ENCODE measurements at regions of chr22 and their contacts with region 1.

Region 1: DNA sequence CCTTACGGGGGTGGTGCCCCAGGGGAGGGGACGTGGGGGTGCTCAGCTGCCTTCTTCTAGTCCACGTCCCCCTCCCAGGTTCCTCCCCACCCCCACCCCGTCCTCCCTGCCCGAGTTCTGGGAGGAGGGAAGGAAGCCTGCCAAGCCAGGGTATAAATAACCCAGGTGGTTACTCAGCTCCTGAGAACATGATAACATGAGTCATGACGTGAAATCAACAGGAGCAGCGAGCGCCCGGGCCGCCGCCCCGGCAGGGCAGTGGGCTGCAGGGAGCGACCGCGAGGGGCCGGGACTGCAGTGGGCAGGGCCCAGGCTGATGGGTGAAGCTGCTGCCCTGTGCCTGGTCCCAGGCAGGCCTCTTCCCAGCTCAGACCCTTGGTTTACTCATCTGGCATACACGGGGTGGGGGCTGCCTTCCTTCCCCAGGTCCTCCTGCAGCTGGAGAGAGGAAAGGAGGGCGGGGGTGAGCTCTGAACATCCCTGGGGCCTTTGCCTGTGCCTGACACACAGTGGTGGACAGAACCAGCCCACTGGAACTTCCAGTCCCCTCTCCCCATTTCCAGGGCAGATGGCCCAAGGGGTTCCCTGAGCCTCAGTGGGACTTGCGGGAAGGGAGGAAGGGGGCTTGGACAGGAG is 8.8 kb upstream of the PDGFB start:
- DNase-seq: no peak
- ATAC-seq: peak; percentile 41
- H3K4me3 Mint-ChIP-seq: no peak overlapping the region
- H3K27ac Mint-ChIP-seq: no peak overlapping the region
- H3K4me1 Mint-ChIP-seq: peaks cover 10% of the 10 kb centered on the region
- H3K27me3 Mint-ChIP-seq: peaks cover 53% of the 10 kb centered on the region
- CTCF ChIP-seq: no peak

Region 2: DNA sequence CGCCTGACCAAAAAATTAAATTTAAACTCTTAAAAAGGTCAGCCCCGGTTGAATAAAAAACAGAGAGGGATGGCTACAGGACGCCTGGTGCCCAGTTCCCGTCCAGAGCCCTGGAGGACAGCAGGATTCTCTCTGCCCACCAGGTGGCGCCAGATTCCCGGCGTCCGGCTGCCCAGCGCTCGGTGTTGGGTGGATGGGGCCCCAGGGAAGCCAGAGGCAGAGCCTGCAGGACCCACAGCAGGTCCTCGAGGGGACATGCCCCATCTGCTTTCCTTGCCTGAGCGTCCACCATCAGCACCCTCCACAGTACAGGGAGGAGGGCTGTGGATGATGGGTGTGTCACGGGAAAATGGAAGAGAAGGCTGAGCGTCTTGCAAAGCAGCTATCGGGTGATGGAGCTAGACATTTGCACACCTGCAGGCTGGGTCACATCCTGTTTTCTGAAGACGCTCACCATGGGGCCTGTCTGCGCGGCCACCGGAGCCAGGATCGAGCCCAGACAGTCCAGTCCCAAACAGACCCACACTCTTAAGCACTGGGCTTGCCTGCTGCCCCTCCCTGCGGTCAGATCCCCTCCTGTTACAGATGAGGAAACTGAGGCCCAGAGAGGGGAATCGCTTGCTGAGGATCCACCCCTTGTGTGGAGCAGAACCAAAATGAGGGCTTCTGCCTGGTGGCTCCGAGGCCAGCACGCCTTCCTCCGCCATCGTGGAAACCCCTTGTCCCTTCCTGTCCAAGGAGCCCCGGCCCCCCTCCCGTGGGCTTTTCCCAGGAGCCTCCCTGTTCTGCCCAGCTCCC is 82.5 kb before region 1 on chr22:
- CTCF ChIA-PET with region 1: no interaction called
- POLR2A ChIA-PET with region 1: no interaction called
- intact Hi-C with region 1: no loop called
- DNase-seq: peak; percentile 85
- ATAC-seq: peak; percentile 83
- H3K4me3 Mint-ChIP-seq: peak overlapping the region; percentile 77
- H3K27ac Mint-ChIP-seq: peak overlapping the region; percentile 76
- H3K4me1 Mint-ChIP-seq: peaks cover 42% of the 10 kb centered on the region
- H3K27me3 Mint-ChIP-seq: no peaks in the 10 kb centered on the region
- CTCF ChIP-seq: peak; percentile 93

Region 3: GRCh38 chr22:39205338-39206021 is 48.1 kb before region 1 on chr22:
- CTCF ChIA-PET with region 1: no interaction called
- POLR2A ChIA-PET with region 1: interaction called, 12 read pairs
- intact Hi-C with region 1: no loop called
- DNase-seq: no peak
- ATAC-seq: peak; percentile 64
- H3K4me3 Mint-ChIP-seq: no peak overlapping the region
- H3K27ac Mint-ChIP-seq: no peak overlapping the region
- H3K4me1 Mint-ChIP-seq: peaks cover 14% of the 10 kb centered on the region
- H3K27me3 Mint-ChIP-seq: peaks cover 4% of the 10 kb centered on the region
- CTCF ChIP-seq: no peak

Region 4: GRCh38 chr22:39306581-39307361 is 53.2 kb after region 1 on chr22:
- CTCF ChIA-PET with region 1: no interaction called
- POLR2A ChIA-PET with region 1: no interaction called
- intact Hi-C with region 1: loop called (anchors 10 kb)
- DNase-seq: no peak
- ATAC-seq: peak; percentile 29
- H3K4me3 Mint-ChIP-seq: no peak overlapping the region
- H3K27ac Mint-ChIP-seq: no peak overlapping the region
- H3K4me1 Mint-ChIP-seq: peaks cover 17% of the 10 kb centered on the region
- H3K27me3 Mint-ChIP-seq: no peaks in the 10 kb centered on the region
- CTCF ChIP-seq: no peak

Measured in activated B cell treated with CpG ODN at 0.5 μM for 24 hours (primary cell).